CD4-positive, alpha-beta T cell (primary cell): ENCODE measurements at regions of chr1 and their contacts with region 1.

Region 1: DNA sequence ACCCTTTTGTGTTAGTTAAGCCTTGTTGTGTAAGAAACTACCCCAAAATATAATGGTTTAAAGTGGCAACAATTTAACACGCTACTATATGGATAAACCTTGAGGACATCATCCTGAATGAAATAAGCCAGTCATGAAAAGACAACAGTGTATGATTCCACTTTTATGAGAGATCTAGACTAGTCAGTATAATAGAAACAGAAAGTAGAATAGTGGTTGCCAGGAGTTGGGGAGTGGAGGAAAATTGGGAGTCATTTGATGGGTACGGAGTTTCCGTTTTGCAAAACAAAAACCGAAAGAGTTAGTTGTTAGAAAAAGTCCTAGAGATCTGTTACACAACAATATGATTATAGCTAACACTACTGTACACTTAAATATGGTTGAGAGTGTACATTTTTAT is 16.0 kb upstream of the CHIA start:
- DNase-seq: peak in 2 of 14 experiments; percentile 6 to 58
- ATAC-seq: no peak
- H3K4me3 ChIP-seq: no peak overlapping the region
- H3K4me3 Mint-ChIP-seq: peak overlapping the region; percentile 9
- H3K27ac ChIP-seq: no peak overlapping the region
- H3K27ac Mint-ChIP-seq: no peak overlapping the region
- H3K4me1 ChIP-seq: peaks cover 17% of the 10 kb centered on the region
- H3K4me1 Mint-ChIP-seq: peaks cover 16% of the 10 kb centered on the region
- H3K27me3 ChIP-seq: peaks cover 20 to 23% of the 10 kb centered on the region in 2 experiments
- H3K27me3 Mint-ChIP-seq: peaks cover 28% of the 10 kb centered on the region
- CTCF ChIP-seq: no peak

Region 2: DNA sequence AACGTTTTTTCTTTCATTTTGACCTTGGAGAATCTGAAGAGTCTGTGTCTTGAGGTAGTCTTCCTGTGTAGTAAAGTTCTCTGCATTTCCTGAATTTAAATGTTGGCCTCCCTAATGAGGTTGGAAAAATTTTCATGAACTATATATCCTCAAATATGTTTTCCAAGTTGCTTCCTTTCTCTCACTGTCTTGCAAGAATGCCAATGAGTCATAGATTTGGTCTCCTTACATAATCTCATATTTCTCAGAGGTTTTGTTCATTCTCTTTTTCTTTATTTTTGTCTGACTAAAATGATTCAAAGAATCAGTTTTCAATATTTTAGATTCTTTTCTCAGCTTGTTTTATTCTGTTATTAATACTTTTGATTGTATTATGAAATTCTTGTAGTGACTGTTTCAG is 222.4 kb before region 1 on chr1:
- CTCF ChIA-PET with region 1: no interaction called
- POLR2A ChIA-PET with region 1: no interaction called
- intact Hi-C with region 1: no loop called
- DNase-seq: no peak
- ATAC-seq: no peak
- H3K4me3 ChIP-seq: no peak overlapping the region
- H3K4me3 Mint-ChIP-seq: no peak overlapping the region
- H3K27ac ChIP-seq: no peak overlapping the region
- H3K27ac Mint-ChIP-seq: no peak overlapping the region
- H3K4me1 ChIP-seq: no peaks in the 10 kb centered on the region
- H3K4me1 Mint-ChIP-seq: no peaks in the 10 kb centered on the region
- H3K27me3 ChIP-seq: no peaks in the 10 kb centered on the region
- H3K27me3 Mint-ChIP-seq: peaks cover 18% of the 10 kb centered on the region
- CTCF ChIP-seq: no peak

Region 3: DNA sequence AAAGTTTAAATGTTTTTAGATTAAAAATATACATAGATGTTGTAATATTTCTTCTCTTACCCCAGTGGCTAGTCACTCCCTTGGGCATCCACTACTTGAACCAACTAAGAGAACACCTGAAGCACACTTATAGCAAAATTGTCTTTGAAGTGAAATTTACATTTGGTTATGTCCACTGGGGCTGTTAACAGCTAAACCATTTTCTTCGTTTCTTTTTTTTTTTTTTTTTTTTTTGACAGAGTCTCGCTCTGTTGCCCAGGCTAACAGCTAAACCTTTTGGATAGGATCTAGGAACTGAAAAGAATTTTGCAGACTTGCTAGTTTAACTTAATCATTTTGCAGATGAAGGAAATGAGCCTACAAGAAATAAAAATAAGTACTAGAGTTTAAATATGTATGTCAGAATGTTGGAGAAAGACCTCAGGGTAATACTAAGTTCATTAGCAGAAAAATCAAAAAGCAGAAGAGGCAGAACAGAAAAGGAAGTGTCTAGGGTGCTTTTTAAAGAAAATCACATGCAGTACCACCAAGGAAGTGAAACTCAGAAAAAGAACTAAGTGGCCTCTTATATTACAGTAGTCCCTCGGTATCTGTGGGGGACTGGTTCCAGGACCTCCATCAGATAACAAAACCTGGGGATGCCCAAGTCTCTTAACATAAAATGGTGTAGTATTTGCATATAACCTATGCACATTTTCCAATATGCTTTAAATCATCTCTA is 146.6 kb before region 1 on chr1:
- CTCF ChIA-PET with region 1: no interaction called
- POLR2A ChIA-PET with region 1: no interaction called
- intact Hi-C with region 1: no loop called
- DNase-seq: peak in 3 of 14 experiments; percentile 15 to 28 (median 27)
- ATAC-seq: no peak
- H3K4me3 ChIP-seq: no peak overlapping the region
- H3K4me3 Mint-ChIP-seq: no peak overlapping the region
- H3K27ac ChIP-seq: no peak overlapping the region
- H3K27ac Mint-ChIP-seq: peak overlapping the region; percentile 52
- H3K4me1 ChIP-seq: no peaks in the 10 kb centered on the region
- H3K4me1 Mint-ChIP-seq: peaks cover 43% of the 10 kb centered on the region
- H3K27me3 ChIP-seq: no peaks in the 10 kb centered on the region
- H3K27me3 Mint-ChIP-seq: no peaks in the 10 kb centered on the region
- CTCF ChIP-seq: no peak

Region 4: DNA sequence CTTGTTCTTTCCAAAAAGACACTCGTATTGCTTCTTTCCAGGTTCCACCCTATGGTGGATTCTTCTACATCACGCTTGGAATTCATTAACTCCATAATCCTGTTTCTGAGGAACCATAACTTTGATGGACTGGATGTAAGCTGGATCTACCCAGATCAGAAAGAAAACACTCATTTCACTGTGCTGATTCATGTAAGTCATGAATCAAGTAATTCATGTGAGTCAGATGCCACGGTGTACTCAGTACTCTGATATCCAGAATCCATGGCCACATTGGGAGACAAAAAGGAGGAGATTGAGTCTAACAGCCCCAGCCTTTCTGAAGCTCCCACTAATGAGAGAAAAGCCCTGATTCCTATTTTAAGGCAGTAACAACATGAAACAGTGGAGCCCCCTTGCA is 39.8 kb before region 1 on chr1:
- CTCF ChIA-PET with region 1: no interaction called
- POLR2A ChIA-PET with region 1: no interaction called
- intact Hi-C with region 1: loop called in 1 of 2 experiments (anchors 5 kb)
- DNase-seq: no peak
- ATAC-seq: no peak
- H3K4me3 ChIP-seq: no peak overlapping the region
- H3K4me3 Mint-ChIP-seq: no peak overlapping the region
- H3K27ac ChIP-seq: no peak overlapping the region
- H3K27ac Mint-ChIP-seq: no peak overlapping the region
- H3K4me1 ChIP-seq: peaks cover 13% of the 10 kb centered on the region
- H3K4me1 Mint-ChIP-seq: peaks cover 70% of the 10 kb centered on the region
- H3K27me3 ChIP-seq: no peaks in the 10 kb centered on the region
- H3K27me3 Mint-ChIP-seq: no peaks in the 10 kb centered on the region
- CTCF ChIP-seq: no peak

Region 5: GRCh38 chr1:112925015-112925414 is 1650.4 kb after region 1 on chr1:
- CTCF ChIA-PET with region 1: no interaction called
- POLR2A ChIA-PET with region 1: no interaction called
- intact Hi-C with region 1: no loop called
- DNase-seq: no peak
- ATAC-seq: no peak
- H3K4me3 ChIP-seq: no peak overlapping the region
- H3K4me3 Mint-ChIP-seq: no peak overlapping the region
- H3K27ac ChIP-seq: no peak overlapping the region
- H3K27ac Mint-ChIP-seq: no peak overlapping the region
- H3K4me1 ChIP-seq: no peaks in the 10 kb centered on the region
- H3K4me1 Mint-ChIP-seq: no peaks in the 10 kb centered on the region
- H3K27me3 ChIP-seq: no peaks in the 10 kb centered on the region
- H3K27me3 Mint-ChIP-seq: no peaks in the 10 kb centered on the region
- CTCF ChIP-seq: no peak